ENCODE measurements at regions of chr4 and their contacts with region 1.

Region 1: GRCh38 chr4:10018818-10019461 is 2.4 kb downstream of the SLC2A9 start:
- DNase-seq: peak; percentile 85
- ATAC-seq: peak; percentile 99
- H3K4me3 Mint-ChIP-seq: peak overlapping the region; percentile 90
- H3K27ac Mint-ChIP-seq: peak overlapping the region; percentile 88
- H3K4me1 Mint-ChIP-seq: peaks cover 37% of the 10 kb centered on the region
- H3K27me3 Mint-ChIP-seq: no peaks in the 10 kb centered on the region
- CTCF ChIP-seq: peak; percentile 69

Region 2: GRCh38 chr4:9704551-9705332 is 314.2 kb before region 1 on chr4:
- CTCF ChIA-PET with region 1: interaction called, 6 read pairs
- POLR2A ChIA-PET with region 1: no interaction called
- intact Hi-C with region 1: loop called (anchors 2 kb)
- DNase-seq: no peak
- ATAC-seq: no peak
- H3K4me3 Mint-ChIP-seq: no peak overlapping the region
- H3K27ac Mint-ChIP-seq: no peak overlapping the region
- H3K4me1 Mint-ChIP-seq: peaks cover 8% of the 10 kb centered on the region
- H3K27me3 Mint-ChIP-seq: peaks cover 3% of the 10 kb centered on the region
- CTCF ChIP-seq: no peak

Region 3: DNA sequence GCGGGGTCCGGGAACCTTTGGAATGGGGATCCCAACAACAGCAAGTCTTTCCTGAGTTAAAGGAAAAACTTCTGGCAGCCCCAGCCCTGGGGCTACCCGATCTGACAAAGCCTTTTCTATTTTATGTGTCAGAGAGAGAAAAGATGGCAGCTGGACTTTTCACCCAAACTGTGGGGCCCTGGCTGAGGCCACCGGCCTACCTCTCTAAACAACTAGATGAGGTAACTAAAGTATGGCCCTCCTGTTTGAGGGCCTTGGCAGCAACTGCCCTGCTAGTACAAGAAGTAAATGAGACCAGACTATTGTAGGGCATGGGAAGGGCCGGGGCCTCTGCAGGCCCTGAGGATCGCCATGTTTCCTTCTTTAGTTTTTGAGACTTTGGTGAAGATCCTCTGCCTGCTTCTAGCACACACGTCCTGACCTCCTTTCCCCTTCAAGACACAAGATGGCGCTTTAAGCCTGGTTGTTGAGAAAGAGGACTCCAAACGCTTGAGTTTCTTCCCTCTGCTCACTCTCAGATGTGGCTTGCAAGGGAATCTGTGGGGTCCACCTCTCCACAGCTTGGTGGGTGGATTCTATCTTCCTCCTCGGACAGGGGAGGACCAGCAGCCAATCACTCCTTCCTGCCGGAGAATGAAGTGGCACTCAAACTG is 256.0 kb before region 1 on chr4:
- CTCF ChIA-PET with region 1: interaction called, 5 read pairs
- POLR2A ChIA-PET with region 1: no interaction called
- intact Hi-C with region 1: loop called (anchors 1 kb)
- DNase-seq: no peak
- ATAC-seq: no peak
- H3K4me3 Mint-ChIP-seq: no peak overlapping the region
- H3K27ac Mint-ChIP-seq: no peak overlapping the region
- H3K4me1 Mint-ChIP-seq: no peaks in the 10 kb centered on the region
- H3K27me3 Mint-ChIP-seq: peaks cover 2% of the 10 kb centered on the region
- CTCF ChIP-seq: no peak

Region 4: DNA sequence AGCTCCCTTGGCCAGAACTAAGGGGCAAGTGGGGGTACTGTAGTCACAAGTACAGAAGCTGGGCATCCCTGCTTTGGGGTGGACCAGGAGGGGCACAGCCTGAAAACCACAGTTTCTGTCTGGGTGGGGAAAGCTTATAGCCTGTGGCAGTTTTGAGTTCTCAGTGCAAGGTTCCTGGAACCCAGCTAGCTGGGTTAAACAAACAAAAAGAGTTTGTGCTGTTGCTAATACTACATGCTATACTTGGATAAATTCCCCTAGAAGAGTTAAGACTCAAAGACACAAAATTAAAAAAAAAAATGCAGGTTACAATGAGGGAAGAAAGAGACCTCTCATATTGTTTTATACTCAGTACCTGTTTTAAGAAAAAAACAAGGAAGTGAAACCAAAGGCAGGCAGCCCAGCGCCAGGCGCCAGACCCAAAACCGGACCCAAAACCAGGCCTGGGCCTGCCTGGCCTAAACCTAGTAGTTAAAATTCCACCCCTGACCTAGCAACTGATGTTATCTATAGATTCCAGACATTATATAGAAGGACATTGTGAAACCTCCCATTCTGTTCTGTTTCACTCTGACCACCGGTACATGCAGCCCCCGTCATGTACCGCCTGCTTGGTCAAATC is 48.4 kb before region 1 on chr4:
- CTCF ChIA-PET with region 1: no interaction called
- POLR2A ChIA-PET with region 1: no interaction called
- intact Hi-C with region 1: loop called (anchors 2 kb)
- DNase-seq: no peak
- ATAC-seq: peak; percentile 61
- H3K4me3 Mint-ChIP-seq: no peak overlapping the region
- H3K27ac Mint-ChIP-seq: peak overlapping the region; percentile 73
- H3K4me1 Mint-ChIP-seq: peaks cover 15% of the 10 kb centered on the region
- H3K27me3 Mint-ChIP-seq: no peaks in the 10 kb centered on the region
- CTCF ChIP-seq: no peak

Region 5: GRCh38 chr4:10040049-10040892 is 21.3 kb after region 1 on chr4:
- CTCF ChIA-PET with region 1: no interaction called
- POLR2A ChIA-PET with region 1: no interaction called
- intact Hi-C with region 1: no loop called
- DNase-seq: no peak
- ATAC-seq: no peak
- H3K4me3 Mint-ChIP-seq: no peak overlapping the region
- H3K27ac Mint-ChIP-seq: no peak overlapping the region
- H3K4me1 Mint-ChIP-seq: peaks cover 7% of the 10 kb centered on the region
- H3K27me3 Mint-ChIP-seq: no peaks in the 10 kb centered on the region
- CTCF ChIP-seq: no peak

Region 6: DNA sequence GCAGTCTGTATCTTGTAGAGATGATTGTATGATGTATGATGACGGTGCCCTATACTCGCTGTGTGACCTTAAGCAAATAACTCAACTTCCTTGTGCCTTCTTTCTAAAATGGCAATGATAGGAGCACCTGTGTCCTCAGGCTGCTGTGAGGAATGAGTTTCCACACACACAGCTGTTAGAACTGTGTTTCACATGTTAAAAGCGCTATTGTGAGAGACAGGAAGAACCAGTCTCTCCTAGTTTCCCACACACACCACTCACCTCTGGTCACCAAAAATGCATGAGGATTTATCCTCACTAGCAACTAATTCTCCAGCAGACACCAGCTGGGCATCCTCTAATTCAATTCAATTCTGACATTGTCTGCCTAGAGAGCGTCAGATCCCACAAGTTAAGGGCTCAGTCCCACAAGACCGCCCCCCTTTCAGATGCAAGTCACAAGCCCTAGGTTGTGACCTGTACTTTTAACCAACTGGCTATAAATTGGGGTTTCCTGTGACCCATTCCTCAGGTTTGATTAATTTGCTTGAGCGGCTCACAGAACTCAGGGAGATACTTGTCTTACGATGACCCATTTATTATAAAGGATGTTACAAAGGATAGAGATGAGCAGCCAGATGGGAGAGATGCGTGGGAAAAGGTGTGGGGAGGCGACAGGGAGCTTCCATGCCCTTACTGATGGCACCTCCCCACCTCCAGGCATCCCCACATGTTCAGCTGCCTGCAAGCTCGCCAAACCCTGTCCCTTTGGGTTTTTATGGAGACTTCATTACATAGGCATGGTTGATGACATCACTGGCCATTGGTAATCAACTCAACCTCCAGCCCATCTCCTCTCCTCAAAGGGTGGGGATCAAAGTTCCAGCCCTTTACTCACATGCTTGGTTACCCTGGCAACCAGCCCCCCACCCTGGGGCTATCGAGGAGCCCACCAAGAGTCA is 31.5 kb after region 1 on chr4:
- CTCF ChIA-PET with region 1: no interaction called
- POLR2A ChIA-PET with region 1: no interaction called
- intact Hi-C with region 1: no loop called
- DNase-seq: no peak
- ATAC-seq: no peak
- H3K4me3 Mint-ChIP-seq: no peak overlapping the region
- H3K27ac Mint-ChIP-seq: no peak overlapping the region
- H3K4me1 Mint-ChIP-seq: peaks cover 3% of the 10 kb centered on the region
- H3K27me3 Mint-ChIP-seq: peaks cover 7% of the 10 kb centered on the region
- CTCF ChIP-seq: no peak

Region 7: DNA sequence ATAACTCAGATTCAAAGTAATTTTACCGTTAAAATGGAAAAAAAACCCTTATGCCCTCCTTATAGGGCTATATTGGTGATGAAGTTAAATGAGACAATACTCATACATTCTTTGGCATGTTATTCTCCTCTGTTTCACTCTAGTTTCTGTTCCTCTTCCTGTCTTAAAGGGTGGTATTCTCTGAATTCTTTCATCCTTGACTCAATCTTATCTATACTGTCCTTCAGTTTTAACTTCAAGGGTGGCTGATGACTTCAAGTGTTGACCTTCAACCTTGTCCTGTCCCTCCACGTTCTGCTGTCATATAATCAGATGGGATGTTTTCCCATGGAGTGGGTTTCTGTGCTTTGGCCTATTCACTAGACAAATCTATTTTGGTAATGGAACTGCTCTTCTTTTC is 394.2 kb after region 1 on chr4:
- CTCF ChIA-PET with region 1: no interaction called
- POLR2A ChIA-PET with region 1: no interaction called
- intact Hi-C with region 1: loop called (anchors 5 kb)
- DNase-seq: no peak
- ATAC-seq: peak; percentile 93
- H3K4me3 Mint-ChIP-seq: peak overlapping the region; percentile 36
- H3K27ac Mint-ChIP-seq: peak overlapping the region; percentile 67
- H3K4me1 Mint-ChIP-seq: peaks cover 45% of the 10 kb centered on the region
- H3K27me3 Mint-ChIP-seq: no peaks in the 10 kb centered on the region
- CTCF ChIP-seq: no peak